Panc1 (cell line): ENCODE measurements at regions of chr17 and their contacts with region 1.

Region 1: DNA sequence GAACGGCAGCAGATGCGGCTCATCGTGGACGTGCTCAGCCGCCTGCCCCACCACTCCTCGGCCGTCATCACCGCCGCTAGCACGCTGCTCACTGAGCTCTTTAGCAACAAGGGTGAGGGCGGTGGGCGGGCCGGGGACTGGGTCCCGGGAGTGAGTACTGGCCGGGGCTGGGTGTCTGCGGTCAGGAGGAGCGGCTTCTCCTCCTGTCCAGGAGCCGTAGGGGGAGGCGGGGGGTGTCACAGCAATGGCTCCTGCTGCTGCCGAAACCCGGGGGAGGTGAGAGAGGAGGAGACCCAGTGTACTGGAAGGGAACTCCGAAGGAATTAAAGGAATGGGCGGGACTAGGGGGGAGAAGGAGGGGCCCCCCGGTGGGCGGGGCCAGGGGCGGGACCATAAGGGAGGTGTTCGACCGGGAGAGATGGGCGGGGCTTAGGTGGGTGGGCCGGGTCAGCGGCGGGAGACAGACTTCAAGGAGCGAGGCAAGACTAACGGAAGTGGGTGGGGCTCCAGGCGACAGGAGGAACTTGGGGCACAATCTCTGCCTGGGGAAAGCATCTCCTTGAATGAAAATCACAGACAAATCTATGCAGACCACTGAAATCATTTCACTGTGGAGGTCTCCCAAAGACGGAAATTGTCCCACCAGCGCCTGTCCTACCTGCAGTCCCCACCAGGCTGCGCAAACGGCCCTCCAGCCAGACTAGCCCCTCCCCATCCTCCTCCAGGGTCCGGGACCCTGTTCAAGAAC is 2.4 kb downstream of the NAGS start:
- DNase-seq: peak; percentile 79
- ATAC-seq: peak; percentile 86
- H3K4me3 ChIP-seq: peak overlapping the region; percentile 69 to 76
- H3K27ac ChIP-seq: peak overlapping the region; percentile 81
- H3K4me1 ChIP-seq: peaks cover 8% of the 10 kb centered on the region
- H3K27me3 ChIP-seq: no peaks in the 10 kb centered on the region
- CTCF ChIP-seq: peak; percentile 60

Region 2: DNA sequence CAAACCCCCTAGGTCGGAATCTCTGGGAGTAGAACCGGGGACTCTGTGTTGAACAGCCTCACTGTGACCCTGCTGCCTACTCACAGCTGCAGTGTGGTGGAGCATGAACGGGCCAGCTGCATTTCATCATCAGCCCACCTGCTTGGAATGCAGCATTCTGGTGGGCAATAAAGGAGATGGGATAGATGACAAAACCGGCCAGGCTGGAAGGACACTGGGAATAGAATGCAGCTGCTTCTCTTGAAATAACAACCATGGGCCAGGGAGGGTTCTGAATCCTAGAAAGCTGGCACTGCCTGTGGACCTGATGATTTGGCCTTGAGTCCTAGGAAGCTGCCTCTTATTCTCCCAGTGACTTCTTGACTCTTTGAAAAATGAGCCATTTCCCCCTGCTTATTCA is 203.0 kb before region 1 on chr17:
- CTCF ChIA-PET with region 1: no interaction called
- POLR2A ChIA-PET with region 1: no interaction called
- in situ Hi-C with region 1: no loop called
- intact Hi-C with region 1: no loop called
- DNase-seq: no peak
- ATAC-seq: no peak
- H3K4me3 ChIP-seq: no peak overlapping the region
- H3K27ac ChIP-seq: no peak overlapping the region
- H3K4me1 ChIP-seq: no peaks in the 10 kb centered on the region
- H3K27me3 ChIP-seq: no peaks in the 10 kb centered on the region
- CTCF ChIP-seq: no peak

Region 3: DNA sequence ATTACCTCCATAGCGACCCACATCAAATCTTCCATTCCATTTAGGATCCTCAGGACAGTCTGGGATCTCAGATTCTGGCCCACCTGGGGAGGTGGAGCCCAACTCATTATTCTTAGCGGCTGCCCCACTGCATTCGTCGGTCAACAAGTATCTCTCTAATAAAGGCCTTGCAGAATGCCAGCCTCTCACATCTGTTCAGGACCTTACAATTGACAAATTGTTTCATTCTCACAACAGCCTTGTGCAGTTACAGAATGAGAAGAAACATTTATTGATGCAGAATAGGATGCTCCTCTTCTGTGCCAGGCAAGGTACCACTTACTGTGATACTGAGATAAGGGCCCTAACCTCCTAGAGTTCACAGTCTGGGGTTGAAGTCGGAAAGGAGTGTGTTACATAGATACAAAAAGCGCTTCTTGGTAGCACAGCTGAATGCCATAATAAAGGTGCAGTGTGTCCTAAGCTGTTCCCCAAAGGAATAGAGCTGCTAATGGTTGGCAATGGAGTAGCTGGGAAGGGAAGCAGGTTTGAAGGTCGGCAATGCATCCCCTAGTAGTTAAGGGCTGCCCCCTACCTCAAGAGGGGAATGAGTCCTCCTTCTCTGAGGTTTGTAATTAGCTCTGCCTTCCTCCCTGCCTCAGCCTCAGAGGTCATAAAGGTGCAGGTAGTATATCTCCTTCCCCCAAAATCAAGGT is 97.1 kb before region 1 on chr17:
- CTCF ChIA-PET with region 1: interaction called, 10 read pairs
- POLR2A ChIA-PET with region 1: no interaction called
- in situ Hi-C with region 1: no loop called
- intact Hi-C with region 1: no loop called
- DNase-seq: no peak
- ATAC-seq: no peak
- H3K4me3 ChIP-seq: no peak overlapping the region
- H3K27ac ChIP-seq: no peak overlapping the region
- H3K4me1 ChIP-seq: peaks cover 8% of the 10 kb centered on the region
- H3K27me3 ChIP-seq: peaks cover 3% of the 10 kb centered on the region; the same call in 1 of the 2 replicates
- CTCF ChIP-seq: no peak

Region 4: DNA sequence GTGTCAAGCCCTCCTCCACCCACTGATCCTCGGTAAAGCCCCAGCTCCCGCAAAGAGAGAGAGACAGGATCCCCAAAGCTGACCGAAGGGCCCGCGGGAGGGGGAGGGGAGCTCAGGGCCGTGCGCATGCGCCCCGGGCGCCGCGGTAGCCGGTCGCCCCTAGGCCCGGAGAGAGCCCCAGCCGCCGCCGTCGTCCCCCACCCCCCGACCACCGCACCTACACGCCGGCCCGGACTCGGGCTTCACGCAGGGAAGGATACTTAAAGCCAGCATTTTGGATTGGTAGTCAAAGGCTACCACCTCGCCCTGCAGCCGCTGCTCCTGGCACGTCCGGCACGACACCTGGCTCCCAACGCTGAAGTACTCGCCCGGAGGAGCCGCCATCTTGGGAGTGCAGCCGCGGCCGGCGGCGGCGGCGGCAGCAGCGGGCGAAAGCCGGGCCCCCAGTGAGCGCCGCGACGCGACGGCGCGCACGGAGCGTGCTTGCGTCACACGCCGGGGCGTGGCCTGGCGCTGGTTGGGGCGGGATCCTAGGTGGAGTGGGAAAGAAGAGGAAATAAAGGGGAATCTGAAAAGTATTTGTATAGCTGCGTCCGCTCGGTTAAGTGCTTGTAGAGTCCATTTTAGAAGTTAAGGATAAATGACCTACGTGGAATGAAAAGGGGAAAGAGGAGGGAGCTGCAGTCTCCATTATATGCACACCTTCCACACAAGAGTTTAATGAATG is 59.6 kb after region 1 on chr17 and contains the start of gene LSM12:
- CTCF ChIA-PET with region 1: no interaction called
- POLR2A ChIA-PET with region 1: no interaction called
- in situ Hi-C with region 1: no loop called
- intact Hi-C with region 1: no loop called
- DNase-seq: no peak
- ATAC-seq: peak; percentile 92
- H3K4me3 ChIP-seq: peak within 1 kb of the TSS; percentile 70 to 81
- H3K27ac ChIP-seq: peak within 1 kb of the TSS; percentile 91
- H3K4me1 ChIP-seq: peaks cover 15% of the 10 kb centered on the region
- H3K27me3 ChIP-seq: no peaks in the 10 kb centered on the region
- CTCF ChIP-seq: no peak
- total RNA-seq, gene LSM12: 73.0 TPM